ENCODE measurements at regions of chr13 and their contacts with region 1.

Region 1: GRCh38 chr13:112689303-112690165 is at the start of gene ATP11A:
- DNase-seq: peak; percentile 80 to 86
- ATAC-seq: peak; percentile 78 to 80
- H3K4me3 ChIP-seq: peak within 1 kb of the TSS; percentile 71 to 98 (median 88)
- H3K27ac ChIP-seq: peak within 1 kb of the TSS; percentile 84 to 96 (median 90)
- H3K4me1 ChIP-seq: peaks cover 22 to 29% of the 10 kb centered on the region in 2 donors
- H3K27me3 ChIP-seq: no peaks in the 10 kb centered on the region
- CTCF ChIP-seq: peak in 3 of 5 experiments; percentile 10 to 38 (median 33)
- POLR2A ChIP-seq: peak; percentile 96 to 97
- total RNA-seq, gene ATP11A: 10.0 to 14.2 (median 12.6) TPM

Region 2: DNA sequence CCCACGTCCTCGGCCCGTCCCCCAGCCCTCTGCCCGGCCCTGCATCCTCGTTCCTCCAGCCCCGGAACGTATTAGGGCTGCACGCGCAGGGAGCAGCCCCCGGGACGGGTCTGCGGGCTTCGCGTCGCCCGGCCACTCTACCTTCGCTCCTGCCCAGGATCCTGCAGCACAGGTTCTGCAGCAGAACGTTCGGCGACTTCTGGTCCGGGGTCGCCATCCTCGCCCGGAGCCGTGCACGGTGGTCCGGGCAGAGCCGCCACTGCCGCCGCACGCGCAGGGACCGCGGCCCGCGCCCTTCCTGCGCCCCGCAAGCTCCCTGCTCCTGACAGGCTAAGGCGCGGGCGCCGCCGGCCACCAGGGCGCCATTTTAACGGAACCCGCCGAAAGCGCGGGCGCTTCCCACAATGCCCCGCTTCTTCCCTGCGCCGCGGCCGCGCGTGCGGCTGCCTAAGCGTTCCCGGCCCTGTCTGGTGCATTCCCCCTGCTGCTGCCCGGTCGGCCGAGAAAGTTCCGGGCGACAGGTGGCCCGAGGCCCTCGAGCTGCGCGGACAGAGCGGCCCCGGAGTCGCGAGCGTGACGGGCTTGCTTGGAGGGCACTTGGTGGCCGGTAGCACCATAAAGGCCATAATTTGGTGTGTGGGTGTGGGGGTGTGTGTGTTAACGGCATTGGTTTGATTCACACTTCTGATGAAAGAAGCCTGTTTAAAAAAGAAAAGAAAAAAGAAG is 101.6 kb before region 1 on chr13 and contains the start of gene TUBGCP3:
- in situ Hi-C with region 1: no loop called
- intact Hi-C with region 1: loop called (anchors 1 kb)
- DNase-seq: peak; percentile 61 to 80
- ATAC-seq: peak; percentile 90 to 92
- H3K4me3 ChIP-seq: peak within 1 kb of the TSS; percentile 86 to 97 (median 95)
- H3K27ac ChIP-seq: peak within 1 kb of the TSS; percentile 93 to 98 (median 96)
- H3K4me1 ChIP-seq: peaks cover 8 to 16% of the 10 kb centered on the region in 2 donors
- H3K27me3 ChIP-seq: no peaks in the 10 kb centered on the region
- CTCF ChIP-seq: peak; percentile 4 to 34 (median 23)
- POLR2A ChIP-seq: peak; percentile 11 to 27
- total RNA-seq, gene TUBGCP3: 10.0 to 14.3 (median 11.0) TPM

Region 3: GRCh38 chr13:112603641-112604225 is 85.8 kb before region 1 on chr13:
- in situ Hi-C with region 1: no loop called
- intact Hi-C with region 1: no loop called
- DNase-seq: no peak
- ATAC-seq: no peak
- H3K4me3 ChIP-seq: no peak overlapping the region
- H3K27ac ChIP-seq: no peak overlapping the region
- H3K4me1 ChIP-seq: peaks cover 5 to 8% of the 10 kb centered on the region in 2 donors
- H3K27me3 ChIP-seq: peaks cover 0 to 8% (median 0%) of the 10 kb centered on the region in 3 donors
- CTCF ChIP-seq: no peak
- POLR2A ChIP-seq: no peak

Region 4: DNA sequence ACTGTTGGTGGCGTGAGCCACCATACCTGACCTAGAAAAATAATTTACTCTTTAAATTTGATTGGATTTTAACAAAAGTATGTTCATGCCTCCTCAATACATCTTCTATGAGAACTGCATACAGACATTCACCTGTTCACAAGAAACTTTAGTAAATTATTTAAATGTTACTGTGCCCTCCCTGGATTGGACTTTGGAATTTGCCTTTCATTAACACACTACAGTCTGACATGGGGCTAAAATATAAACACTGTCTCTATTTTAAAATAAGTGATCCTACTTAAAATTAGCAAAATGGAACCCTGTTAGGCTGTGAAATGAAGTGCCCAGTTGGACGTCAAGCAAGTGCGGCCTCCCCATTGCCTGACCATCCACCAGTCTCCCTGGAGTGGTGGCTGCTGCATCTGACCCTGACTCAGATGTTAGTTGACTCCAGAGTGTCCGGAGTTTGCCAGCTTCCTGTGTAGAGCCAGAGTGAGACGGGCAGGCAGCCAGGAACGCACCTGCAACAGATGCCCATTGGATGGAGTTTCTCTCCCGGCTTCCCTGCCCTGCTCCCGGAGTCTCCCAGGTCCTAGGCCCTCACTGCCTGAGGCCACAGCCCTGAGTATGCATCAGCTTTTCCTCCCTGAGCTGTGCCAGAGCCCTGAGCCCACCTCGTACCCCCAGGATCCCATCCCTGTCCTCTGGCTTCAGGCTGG is 45.6 kb before region 1 on chr13:
- in situ Hi-C with region 1: no loop called
- intact Hi-C with region 1: loop called (anchors 1 kb)
- DNase-seq: no peak
- ATAC-seq: no peak
- H3K4me3 ChIP-seq: no peak overlapping the region
- H3K27ac ChIP-seq: no peak overlapping the region
- H3K4me1 ChIP-seq: no peaks in the 10 kb centered on the region
- H3K27me3 ChIP-seq: peaks cover 4 to 9% (median 4%) of the 10 kb centered on the region in 3 donors
- CTCF ChIP-seq: no peak
- POLR2A ChIP-seq: no peak

Region 5: DNA sequence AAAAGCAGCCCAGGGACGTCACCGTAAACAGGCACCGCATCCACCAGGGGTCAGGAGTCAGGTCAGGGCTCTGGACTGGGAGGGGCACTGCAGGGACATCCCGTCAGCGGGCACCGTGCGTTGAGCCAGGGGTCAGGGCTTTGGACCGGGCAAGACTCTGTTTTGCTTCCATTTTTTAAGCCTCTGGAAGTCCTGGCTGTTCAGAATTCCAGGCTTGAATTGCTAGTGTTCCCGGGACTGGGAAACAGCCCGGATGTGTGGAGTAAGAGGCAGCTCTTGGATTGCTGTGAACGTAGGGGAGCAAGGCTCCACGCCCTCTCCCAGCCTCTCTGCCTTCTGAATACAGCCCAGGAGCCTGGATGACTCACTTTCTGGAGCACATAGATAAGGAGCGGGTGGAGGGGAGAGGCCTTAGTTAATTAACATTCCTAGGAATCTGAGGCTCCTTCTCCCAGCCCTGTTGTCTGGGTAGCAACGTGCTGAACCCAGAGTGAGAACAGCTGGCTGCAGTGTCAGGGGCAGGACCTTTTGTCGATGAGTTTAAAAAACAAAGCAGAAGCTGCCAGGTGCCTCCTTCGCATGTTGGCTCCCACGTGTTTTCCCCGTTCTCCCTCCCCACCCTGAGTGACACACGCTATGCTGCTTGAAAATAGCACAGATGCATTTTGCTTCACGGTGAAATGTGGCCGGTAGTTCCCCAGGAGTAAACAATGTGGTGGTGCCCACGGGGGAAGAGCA is 22.2 kb after region 1 on chr13:
- in situ Hi-C with region 1: no loop called
- intact Hi-C with region 1: loop called (anchors 2 kb)
- DNase-seq: peak; percentile 80 to 85
- ATAC-seq: peak; percentile 97
- H3K4me3 ChIP-seq: peak overlapping the region; percentile 34 to 44 (median 38)
- H3K27ac ChIP-seq: peak overlapping the region; percentile 80 to 89 (median 86)
- H3K4me1 ChIP-seq: peaks cover 17 to 19% of the 10 kb centered on the region in 2 donors
- H3K27me3 ChIP-seq: no peaks in the 10 kb centered on the region
- CTCF ChIP-seq: peak in 2 of 5 experiments; percentile 17 to 29
- POLR2A ChIP-seq: peak in 1 of 2 donors; percentile 32

Region 6: GRCh38 chr13:112725346-112726015 is 35.9 kb after region 1 on chr13:
- in situ Hi-C with region 1: no loop called
- intact Hi-C with region 1: loop called (anchors 5 kb)
- DNase-seq: peak; percentile 85 to 87
- ATAC-seq: peak; percentile 77 to 87
- H3K4me3 ChIP-seq: no peak overlapping the region
- H3K27ac ChIP-seq: peak overlapping the region; percentile 76 to 89 (median 82)
- H3K4me1 ChIP-seq: peaks cover 48 to 49% of the 10 kb centered on the region in 2 donors
- H3K27me3 ChIP-seq: no peaks in the 10 kb centered on the region
- CTCF ChIP-seq: no peak
- POLR2A ChIP-seq: peak; percentile 41 to 48

Region 7: GRCh38 chr13:112740502-112741131 is 51.1 kb after region 1 on chr13:
- in situ Hi-C with region 1: no loop called
- intact Hi-C with region 1: loop called (anchors 1 kb)
- DNase-seq: peak; percentile 89 to 90
- ATAC-seq: peak; percentile 94 to 96
- H3K4me3 ChIP-seq: peak overlapping the region in 1 of 4 donors; percentile 27
- H3K27ac ChIP-seq: peak overlapping the region; percentile 79 to 90 (median 80)
- H3K4me1 ChIP-seq: peaks cover 18 to 34% of the 10 kb centered on the region in 2 donors
- H3K27me3 ChIP-seq: no peaks in the 10 kb centered on the region
- CTCF ChIP-seq: no peak
- POLR2A ChIP-seq: peak; percentile 32 to 43

Measured in gastrocnemius medialis (tissue), 4 donors.